GM12878 (cell line): ENCODE measurements at regions of chr9 and their contacts with region 1.

Region 1: DNA sequence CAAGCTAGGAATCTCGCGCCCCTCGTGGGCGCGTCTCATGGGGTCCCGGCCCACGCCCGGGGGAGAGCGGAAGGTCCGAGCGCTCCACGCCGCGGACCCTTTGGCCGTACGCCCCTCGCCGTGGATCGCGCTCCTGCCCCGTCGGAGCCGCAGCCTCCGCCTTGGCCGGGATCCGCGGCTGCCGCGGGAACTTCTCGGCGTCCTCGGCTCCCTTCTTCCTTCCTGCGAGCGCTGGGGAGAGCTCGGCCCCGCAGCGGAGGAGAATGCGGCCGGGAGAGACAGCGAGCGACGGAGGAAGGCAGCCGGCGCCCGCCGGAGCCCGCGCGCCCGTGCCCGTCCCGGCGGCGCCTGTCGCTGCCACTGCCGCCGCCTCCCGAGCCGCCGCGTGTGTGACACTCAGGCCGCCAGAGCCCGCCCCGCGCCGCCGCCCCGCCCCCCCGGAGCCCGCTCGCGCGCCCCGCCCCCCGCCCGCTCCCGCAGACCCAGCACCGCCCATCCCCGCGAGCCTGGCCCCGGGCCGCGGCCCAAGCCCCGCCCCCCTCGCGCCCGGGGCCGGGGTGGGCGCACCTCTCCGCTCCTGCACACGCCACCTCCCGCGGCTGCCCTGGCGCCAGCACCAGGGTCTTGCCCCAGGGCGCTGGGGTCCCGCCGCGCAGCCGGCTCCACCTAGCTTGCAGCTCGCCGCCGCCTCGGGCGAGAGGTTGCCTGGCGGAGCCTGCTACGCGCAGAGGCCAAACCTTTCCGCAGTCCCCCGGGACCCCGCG is at the start of gene SHB:
- DNase-seq: no peak
- ATAC-seq: peak; percentile 67
- H3K4me3 ChIP-seq: peak within 1 kb of the TSS; percentile 90
- H3K27ac ChIP-seq: no peak within 1 kb of the TSS
- H3K4me1 ChIP-seq: peaks cover 28% of the 10 kb centered on the region
- H3K27me3 ChIP-seq: peaks cover 2 to 9% of the 10 kb centered on the region in 2 experiments; a peak in 3 of 4 replicates
- CTCF ChIP-seq: no peak
- EP300 ChIP-seq: no peak
- POLR2A ChIP-seq: peak; percentile 80
- RAD21 ChIP-seq: no peak
- polyA plus RNA-seq, gene SHB: 0.56 to 0.69 TPM

Region 2: GRCh38 chr9:37465249-37466036 is 603.6 kb before region 1 on chr9 and contains the start of gene ZBTB5:
- CTCF ChIA-PET with region 1: no interaction called
- POLR2A ChIA-PET with region 1: no interaction called
- RAD21 ChIA-PET with region 1: no interaction called
- SMC1A ChIA-PET with region 1: no interaction called
- in situ Hi-C with region 1: no loop called
- intact Hi-C with region 1: loop called (anchors 10 kb)
- DNase-seq: peak; percentile 100
- ATAC-seq: peak; percentile 85
- H3K4me3 ChIP-seq: peak within 1 kb of the TSS; percentile 84
- H3K27ac ChIP-seq: peak within 1 kb of the TSS; percentile 92
- H3K4me1 ChIP-seq: no peaks in the 10 kb centered on the region
- H3K27me3 ChIP-seq: no peaks in the 10 kb centered on the region
- CTCF ChIP-seq: no peak
- EP300 ChIP-seq: no peak
- POLR2A ChIP-seq: no peak
- RAD21 ChIP-seq: no peak
- polyA plus RNA-seq, gene ZBTB5: 1.4 to 2.5 TPM

Region 3: DNA sequence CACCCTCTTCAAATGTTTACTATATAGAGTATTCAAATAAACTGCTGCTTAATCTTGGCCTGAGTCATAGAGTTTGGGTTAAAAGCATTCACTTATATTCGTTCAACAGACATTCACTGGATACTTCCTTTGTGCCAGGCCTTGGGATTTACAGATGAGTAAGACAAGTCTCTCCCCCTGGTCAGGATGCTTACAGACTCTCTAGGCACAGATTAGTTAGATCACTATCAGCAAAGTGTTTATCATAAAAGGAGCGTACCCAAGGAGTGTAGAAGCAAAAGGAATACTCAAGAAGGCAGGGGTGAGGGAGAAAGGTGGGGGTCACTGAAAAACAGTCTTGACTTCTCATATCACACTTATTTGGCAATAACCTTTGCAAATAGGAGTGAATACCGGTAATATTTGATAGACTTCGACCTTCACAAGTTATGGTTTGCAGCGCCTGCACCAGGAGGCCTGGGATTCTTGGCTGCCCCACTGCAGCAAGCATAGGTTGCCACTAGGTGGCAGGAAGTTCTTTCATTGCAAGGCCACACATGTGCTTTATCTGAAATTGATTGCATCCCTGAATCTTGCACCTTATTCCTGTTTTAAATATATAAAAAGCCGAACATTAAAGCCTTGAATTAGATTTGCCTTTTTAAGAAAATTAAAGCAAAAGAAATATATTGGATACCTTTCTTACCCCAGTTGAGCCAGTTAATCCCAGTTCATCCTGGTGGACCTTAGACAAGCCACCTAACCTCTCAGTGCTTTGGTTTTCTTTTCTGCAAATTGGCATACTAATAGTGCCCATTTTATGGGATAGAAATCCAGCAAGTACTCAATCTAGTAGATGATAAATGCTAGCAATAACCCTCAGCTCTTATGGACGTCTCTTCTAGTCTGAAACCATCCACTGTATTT is 321.9 kb before region 1 on chr9:
- CTCF ChIA-PET with region 1: no interaction called
- POLR2A ChIA-PET with region 1: no interaction called
- RAD21 ChIA-PET with region 1: no interaction called
- SMC1A ChIA-PET with region 1: no interaction called
- in situ Hi-C with region 1: no loop called
- intact Hi-C with region 1: loop called (anchors 10 kb)
- DNase-seq: peak; percentile 3
- ATAC-seq: peak; percentile 97
- H3K4me3 ChIP-seq: no peak overlapping the region
- H3K27ac ChIP-seq: no peak overlapping the region
- H3K4me1 ChIP-seq: no peaks in the 10 kb centered on the region
- H3K27me3 ChIP-seq: no peaks in the 10 kb centered on the region
- CTCF ChIP-seq: peak; percentile 93 to 97 (median 96)
- EP300 ChIP-seq: no peak
- POLR2A ChIP-seq: no peak
- RAD21 ChIP-seq: peak; percentile 86

Region 4: GRCh38 chr9:37920471-37921167 is 148.4 kb before region 1 on chr9:
- CTCF ChIA-PET with region 1: interaction called, 3 read pairs
- POLR2A ChIA-PET with region 1: interaction called, 3 read pairs
- RAD21 ChIA-PET with region 1: interaction called, 10 read pairs
- SMC1A ChIA-PET with region 1: interaction called, 39 read pairs
- in situ Hi-C with region 1: no loop called
- intact Hi-C with region 1: no loop called
- DNase-seq: no peak
- ATAC-seq: peak; percentile 89
- H3K4me3 ChIP-seq: no peak overlapping the region
- H3K27ac ChIP-seq: no peak overlapping the region
- H3K4me1 ChIP-seq: no peaks in the 10 kb centered on the region
- H3K27me3 ChIP-seq: no peaks in the 10 kb centered on the region
- CTCF ChIP-seq: no peak
- EP300 ChIP-seq: no peak
- POLR2A ChIP-seq: no peak
- RAD21 ChIP-seq: no peak

Region 5: GRCh38 chr9:38117651-38118050 is 48.6 kb after region 1 on chr9:
- CTCF ChIA-PET with region 1: no interaction called
- POLR2A ChIA-PET with region 1: no interaction called
- RAD21 ChIA-PET with region 1: no interaction called
- SMC1A ChIA-PET with region 1: no interaction called
- in situ Hi-C with region 1: no loop called
- intact Hi-C with region 1: loop called (anchors 5 kb)
- DNase-seq: no peak
- ATAC-seq: no peak
- H3K4me3 ChIP-seq: no peak overlapping the region
- H3K27ac ChIP-seq: no peak overlapping the region
- H3K4me1 ChIP-seq: no peaks in the 10 kb centered on the region
- H3K27me3 ChIP-seq: no peaks in the 10 kb centered on the region; a peak in 1 of 4 replicates
- CTCF ChIP-seq: no peak
- EP300 ChIP-seq: no peak
- POLR2A ChIP-seq: no peak
- RAD21 ChIP-seq: no peak